ENCODE measurements at regions of chr11 and their contacts with region 1.

Region 1: GRCh38 chr11:27183672-27184457 is 143.2 kb downstream of the BBOX1 start:
- DNase-seq: peak in 1 of 2 donors; percentile 50
- ATAC-seq: peak; percentile 73
- H3K4me3 ChIP-seq: no peak overlapping the region
- H3K27ac ChIP-seq: no peak overlapping the region
- H3K4me1 ChIP-seq: no peaks in the 10 kb centered on the region
- H3K27me3 ChIP-seq: no peaks in the 10 kb centered on the region

Region 2: GRCh38 chr11:27028561-27028965 is 155.3 kb before region 1 on chr11:
- intact Hi-C with region 1: no loop called
- DNase-seq: no peak
- ATAC-seq: peak; percentile 76
- H3K4me3 ChIP-seq: no peak overlapping the region
- H3K27ac ChIP-seq: no peak overlapping the region
- H3K4me1 ChIP-seq: no peaks in the 10 kb centered on the region
- H3K27me3 ChIP-seq: no peaks in the 10 kb centered on the region

Region 3: DNA sequence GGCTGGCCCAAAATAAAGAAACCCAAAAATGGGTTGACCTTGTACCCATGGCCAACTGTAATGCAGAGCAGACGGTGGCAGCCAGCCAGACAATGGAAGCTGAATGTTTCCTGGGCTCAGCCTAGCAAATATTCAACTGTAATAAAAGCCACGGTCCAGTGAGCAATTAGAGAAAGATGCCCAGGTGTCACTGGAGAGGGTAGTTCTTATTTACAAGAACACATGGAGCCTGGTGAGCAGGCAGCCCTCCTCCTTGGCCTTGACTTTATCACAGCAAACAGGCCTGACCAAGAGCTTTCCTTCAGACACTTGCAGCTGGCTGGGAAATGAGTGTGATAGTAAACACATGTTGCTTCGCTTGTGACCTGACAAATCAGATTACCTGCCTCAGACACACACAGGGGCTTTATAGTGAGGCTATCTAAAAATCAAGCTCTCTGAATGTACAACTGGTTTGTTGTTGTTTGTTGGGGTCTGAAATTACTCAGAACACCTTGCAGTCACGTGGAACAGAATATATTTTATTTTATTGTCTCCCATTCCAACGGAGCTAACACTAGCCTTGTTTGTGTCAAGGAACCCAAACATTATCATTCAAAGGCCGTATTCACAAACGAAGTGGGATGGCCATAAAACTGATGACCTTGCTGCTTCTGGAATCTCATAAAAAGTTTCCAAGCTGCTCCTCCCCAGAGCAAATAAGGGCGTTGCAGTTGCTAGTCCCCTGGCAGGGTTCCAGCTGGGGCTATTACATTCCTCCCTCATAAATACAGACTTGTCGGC is 17.8 kb after region 1 on chr11:
- intact Hi-C with region 1: no loop called
- DNase-seq: peak; percentile 72 to 85
- ATAC-seq: peak; percentile 26
- H3K4me3 ChIP-seq: no peak overlapping the region
- H3K27ac ChIP-seq: no peak overlapping the region
- H3K4me1 ChIP-seq: peaks cover 2 to 3% of the 10 kb centered on the region in 2 donors
- H3K27me3 ChIP-seq: peaks cover 0 to 1% of the 10 kb centered on the region in 2 donors

Region 4: GRCh38 chr11:27296497-27296896 is 112.6 kb after region 1 on chr11:
- intact Hi-C with region 1: loop called (anchors 2 to 5 kb)
- DNase-seq: no peak
- ATAC-seq: no peak
- H3K4me3 ChIP-seq: no peak overlapping the region
- H3K27ac ChIP-seq: no peak overlapping the region
- H3K4me1 ChIP-seq: no peaks in the 10 kb centered on the region
- H3K27me3 ChIP-seq: no peaks in the 10 kb centered on the region

Region 5: DNA sequence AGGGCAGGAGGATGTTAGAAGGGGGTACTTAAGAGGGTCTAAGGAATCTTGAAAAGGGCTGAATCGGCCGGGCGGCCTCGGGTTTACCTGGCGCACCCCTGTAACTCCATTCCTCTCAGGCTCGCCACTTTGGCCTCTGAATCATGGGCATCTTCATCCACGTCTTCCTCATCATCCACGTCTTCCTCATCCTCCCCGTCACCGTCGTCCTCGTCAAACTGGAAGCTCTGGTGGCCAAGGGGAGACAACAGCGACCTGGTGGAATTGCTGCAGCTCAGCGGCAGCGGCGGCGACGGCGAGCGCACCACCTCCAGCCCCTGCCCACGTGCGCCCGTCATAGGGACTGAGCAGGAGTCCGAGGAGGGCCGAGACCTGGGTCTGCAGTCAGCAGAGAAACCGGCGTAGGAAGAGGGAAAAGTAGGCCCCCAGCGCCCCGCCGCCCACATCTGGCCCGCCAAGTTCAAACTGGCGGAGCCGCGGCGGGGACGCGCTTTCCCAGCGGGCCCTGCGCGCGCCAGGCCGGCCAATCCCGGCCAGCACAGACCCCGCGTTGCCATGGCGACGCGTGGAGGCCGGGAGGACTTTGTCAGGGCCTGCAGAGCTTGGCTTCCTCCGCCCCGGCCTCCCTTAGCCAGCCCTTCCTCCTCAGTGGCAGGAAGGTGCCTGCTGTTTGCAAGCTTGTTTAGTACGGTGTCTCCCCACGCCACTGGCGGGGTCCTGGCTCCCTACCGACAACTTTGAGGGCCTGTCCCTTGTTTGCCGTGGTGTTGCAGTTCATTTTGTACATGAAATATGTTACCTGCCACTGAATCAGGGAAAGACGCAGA is 179.1 kb after region 1 on chr11 and contains the start of gene CCDC34:
- intact Hi-C with region 1: loop called in 1 of 2 experiments (anchors 10 kb)
- DNase-seq: peak; percentile 95
- ATAC-seq: peak; percentile 99
- H3K4me3 ChIP-seq: peak within 1 kb of the TSS; percentile 63 to 74
- H3K27ac ChIP-seq: no peak within 1 kb of the TSS
- H3K4me1 ChIP-seq: peaks cover 0 to 2% of the 10 kb centered on the region in 2 donors
- H3K27me3 ChIP-seq: no peaks in the 10 kb centered on the region
- total RNA-seq, gene CCDC34: 1.4 to 3.1 TPM

Region 6: GRCh38 chr11:27485930-27486773 is 302.3 kb after region 1 on chr11:
- intact Hi-C with region 1: loop called (anchors 2 kb)
- DNase-seq: no peak
- ATAC-seq: peak; percentile 64
- H3K4me3 ChIP-seq: no peak overlapping the region
- H3K27ac ChIP-seq: no peak overlapping the region
- H3K4me1 ChIP-seq: no peaks in the 10 kb centered on the region
- H3K27me3 ChIP-seq: no peaks in the 10 kb centered on the region